ENCODE measurements at regions of chr6 and their contacts with region 1.

Region 1: GRCh38 chr6:15621203-15622044 is 41.4 kb downstream of the DTNBP1 start:
- DNase-seq: no peak
- ATAC-seq: no peak
- H3K4me3 ChIP-seq: no peak overlapping the region
- H3K27ac ChIP-seq: no peak overlapping the region
- H3K4me1 ChIP-seq: no peaks in the 10 kb centered on the region
- H3K27me3 ChIP-seq: no peaks in the 10 kb centered on the region
- CTCF ChIP-seq: no peak
- POLR2A ChIP-seq: no peak
- RAD21 ChIP-seq: no peak

Region 2: GRCh38 chr6:14129575-14129974 is 1491.8 kb before region 1 on chr6:
- CTCF ChIA-PET with region 1: interaction called, 5 read pairs
- POLR2A ChIA-PET with region 1: no interaction called
- RAD21 ChIA-PET with region 1: no interaction called
- intact Hi-C with region 1: loop called (anchors 10 kb)
- DNase-seq: peak; percentile 34
- ATAC-seq: peak; percentile 96
- H3K4me3 ChIP-seq: no peak overlapping the region
- H3K27ac ChIP-seq: no peak overlapping the region
- H3K4me1 ChIP-seq: no peaks in the 10 kb centered on the region
- H3K27me3 ChIP-seq: no peaks in the 10 kb centered on the region
- CTCF ChIP-seq: peak; percentile 50 to 54 (median 51); a peak in 5 of 6 replicates
- POLR2A ChIP-seq: no peak
- RAD21 ChIP-seq: peak; percentile 78

Region 3: GRCh38 chr6:15254070-15254841 is 367.2 kb before region 1 on chr6:
- CTCF ChIA-PET with region 1: no interaction called
- POLR2A ChIA-PET with region 1: no interaction called
- RAD21 ChIA-PET with region 1: no interaction called
- intact Hi-C with region 1: loop called (anchors 10 kb)
- DNase-seq: no peak
- ATAC-seq: no peak
- H3K4me3 ChIP-seq: no peak overlapping the region
- H3K27ac ChIP-seq: no peak overlapping the region
- H3K4me1 ChIP-seq: peaks cover 20 to 31% of the 10 kb centered on the region in 2 experiments
- H3K27me3 ChIP-seq: no peaks in the 10 kb centered on the region
- CTCF ChIP-seq: 0 out of 6 replicates have a peak, but pooled peaks of 2 of the 3 experiments have one; percentile 7 to 11
- POLR2A ChIP-seq: no peak
- RAD21 ChIP-seq: peak; percentile 56

Region 4: DNA sequence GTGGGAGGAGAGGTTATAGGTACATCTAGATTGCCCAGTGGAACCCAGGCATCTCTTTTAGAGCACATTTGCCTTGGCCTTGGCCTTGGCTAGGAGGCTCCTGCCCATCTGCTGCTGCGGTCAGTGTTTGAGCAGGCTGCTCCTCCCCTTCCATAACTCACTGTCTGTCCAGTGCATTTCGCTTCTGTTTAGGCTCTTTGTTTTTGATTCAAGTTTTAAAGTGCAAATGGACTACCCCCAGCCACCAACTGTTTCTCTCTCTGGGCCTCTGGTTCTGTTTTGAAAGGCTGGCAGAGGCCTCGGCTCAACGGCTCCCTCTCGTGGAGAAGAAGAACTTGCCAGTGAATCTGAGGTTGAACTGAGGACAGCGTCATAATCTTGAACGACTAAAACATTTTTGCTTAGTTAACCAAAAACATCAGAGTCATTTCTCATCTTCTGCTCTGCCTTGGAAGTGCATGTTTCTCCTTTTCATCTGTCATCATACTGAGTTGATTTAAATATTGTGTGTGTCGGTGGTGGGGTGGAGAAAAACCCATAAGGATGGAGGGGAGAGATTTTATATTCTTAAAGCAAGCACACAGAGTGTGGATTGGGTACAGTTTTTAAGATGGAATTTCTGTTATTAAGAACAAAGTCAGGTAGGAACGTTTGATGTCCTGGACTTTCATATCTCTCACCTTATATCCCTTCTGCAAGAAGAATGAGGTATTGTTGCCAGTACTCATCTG is 130.0 kb before region 1 on chr6:
- CTCF ChIA-PET with region 1: no interaction called
- POLR2A ChIA-PET with region 1: no interaction called
- RAD21 ChIA-PET with region 1: no interaction called
- intact Hi-C with region 1: loop called (anchors 1 kb)
- DNase-seq: peak; percentile 21
- ATAC-seq: peak; percentile 82
- H3K4me3 ChIP-seq: no peak overlapping the region
- H3K27ac ChIP-seq: no peak overlapping the region
- H3K4me1 ChIP-seq: no peaks in the 10 kb centered on the region
- H3K27me3 ChIP-seq: no peaks in the 10 kb centered on the region
- CTCF ChIP-seq: peak; percentile 52 to 96 (median 92); a peak in 5 of 6 replicates
- POLR2A ChIP-seq: no peak
- RAD21 ChIP-seq: peak; percentile 79

Measured in HCT116 (cell line).